Right ventricle myocardium inferior (tissue), 1 donor: ENCODE measurements at regions of chr10 and their contacts with region 1.

Region 1: GRCh38 chr10:68088744-68089143 is 13.7 kb upstream of the HERC4 start:
- DNase-seq: no peak
- ATAC-seq: no peak

Region 2: DNA sequence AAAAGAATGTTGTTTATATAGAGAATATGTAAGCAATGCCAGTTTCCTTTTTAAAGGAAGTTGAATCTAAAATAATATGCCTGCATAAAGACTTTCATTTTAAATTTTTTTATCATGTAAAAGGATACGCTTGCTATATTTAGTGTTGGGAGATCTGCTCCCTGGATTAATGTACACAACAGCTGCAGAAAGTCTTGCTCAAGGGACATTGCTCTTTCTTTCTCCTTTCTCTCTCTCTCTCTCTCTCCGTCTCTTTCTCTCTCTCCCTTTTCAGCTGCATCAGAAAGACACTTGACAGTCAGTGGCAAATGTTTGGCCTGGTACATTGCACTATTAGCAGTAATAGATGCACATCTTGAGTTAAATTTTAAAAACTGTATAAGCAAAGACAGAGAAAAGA is 21.3 kb after region 1 on chr10:
- intact Hi-C with region 1: loop called (anchors 2 kb)
- DNase-seq: no peak
- ATAC-seq: peak; percentile 54

Region 3: GRCh38 chr10:68560186-68560942 is 471.6 kb after region 1 on chr10 and contains the start of gene TET1:
- intact Hi-C with region 1: no loop called
- DNase-seq: no peak
- ATAC-seq: peak; percentile 81
- total RNA-seq, gene TET1: 3.1 TPM